ENCODE measurements at regions of chr7 and their contacts with region 1.

Region 1: DNA sequence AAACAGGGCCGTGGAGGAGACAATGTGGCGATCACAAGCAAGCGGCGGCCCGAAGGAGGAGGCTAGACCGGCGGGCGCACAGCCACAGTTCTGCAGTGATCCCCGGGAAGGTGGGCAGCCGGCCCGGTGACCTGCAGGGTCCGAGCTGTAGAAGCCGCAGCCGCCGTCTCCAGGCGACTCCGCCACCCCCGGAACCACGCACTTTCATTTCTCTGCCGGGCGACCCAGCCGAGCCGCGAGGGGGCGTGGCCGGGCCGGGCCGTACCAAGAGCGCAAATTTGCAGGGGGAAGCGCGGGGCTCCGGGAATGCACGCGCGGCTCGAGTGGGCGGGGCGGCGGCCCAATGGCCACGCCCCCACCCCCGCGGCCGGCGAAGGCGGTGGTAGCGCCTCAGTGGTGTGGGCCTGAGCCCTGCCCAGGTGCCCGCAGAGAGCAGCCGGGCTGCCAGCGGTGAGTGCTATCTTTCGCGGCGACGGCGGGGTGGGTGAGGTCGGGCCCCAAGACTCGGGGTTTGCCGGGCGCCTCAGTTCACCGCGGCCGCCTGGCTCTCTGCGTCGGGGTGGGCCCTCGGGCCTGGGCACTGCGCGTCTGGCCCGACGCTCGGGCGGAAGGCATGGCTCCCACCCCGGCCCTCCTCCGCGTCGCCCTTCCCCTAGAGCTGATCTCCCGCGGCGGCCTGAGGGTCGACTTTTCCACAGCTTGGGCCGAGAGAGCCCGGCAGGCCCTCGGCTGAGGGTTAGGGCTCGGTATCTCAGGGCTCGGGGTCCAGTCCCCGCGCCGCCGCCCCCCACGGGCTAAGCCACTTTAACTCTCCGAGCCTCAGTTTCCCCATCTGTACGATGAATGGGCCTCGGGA is at the start of gene POR:
- DNase-seq: peak; percentile 96 to 99
- ATAC-seq: peak; percentile 99
- H3K4me3 ChIP-seq: peak within 1 kb of the TSS; percentile 56 to 91
- H3K27ac ChIP-seq: peak within 1 kb of the TSS in 1 of 2 donors; percentile 67
- H3K4me1 ChIP-seq: no peaks in the 10 kb centered on the region
- H3K27me3 ChIP-seq: no peaks in the 10 kb centered on the region
- total RNA-seq, gene POR: 87.4 to 121 TPM

Region 2: DNA sequence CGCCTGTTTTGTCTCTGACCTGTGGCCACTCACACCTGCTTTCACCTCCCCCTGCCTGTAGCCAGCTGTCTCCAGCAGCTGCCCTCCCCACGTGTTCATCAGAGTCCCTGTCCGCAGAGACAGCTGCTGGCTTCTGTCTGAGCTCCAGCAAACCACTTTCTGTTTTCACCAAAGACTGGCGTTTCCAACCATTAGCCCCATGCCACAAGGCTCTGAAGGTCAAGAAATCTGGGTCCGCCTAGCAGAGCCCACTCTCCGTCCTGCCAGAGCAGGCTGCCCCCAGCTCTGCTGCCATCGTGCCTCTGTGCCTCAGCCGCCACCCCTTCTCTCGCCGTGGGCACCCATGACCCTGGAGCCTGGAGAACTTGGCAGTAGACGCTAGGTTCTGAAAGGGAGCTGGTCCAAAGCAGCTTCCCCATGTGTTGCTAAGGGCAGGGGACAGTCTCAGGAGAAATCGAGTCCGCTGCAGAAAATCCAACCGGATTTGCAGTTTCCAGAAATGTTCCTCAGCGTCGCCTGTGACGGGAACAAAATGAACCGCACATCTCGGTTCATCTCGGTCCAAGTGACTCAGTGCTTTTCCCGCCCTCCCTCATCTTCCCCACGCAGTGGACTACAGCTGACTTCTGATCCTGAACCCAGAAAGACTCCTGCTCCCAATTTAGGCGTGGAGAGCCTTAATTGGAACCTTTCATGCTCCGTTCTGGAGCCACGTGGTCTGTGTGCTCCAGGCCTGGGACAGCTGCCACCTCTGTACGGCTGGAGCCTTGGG is 51.4 kb after region 1 on chr7:
- intact Hi-C with region 1: loop called (anchors 1 to 5 kb)
- DNase-seq: peak; percentile 78 to 87
- ATAC-seq: peak; percentile 79
- H3K4me3 ChIP-seq: no peak overlapping the region
- H3K27ac ChIP-seq: peak overlapping the region; percentile 94 to 97
- H3K4me1 ChIP-seq: peaks cover 0 to 2% of the 10 kb centered on the region in 2 donors
- H3K27me3 ChIP-seq: no peaks in the 10 kb centered on the region